Dendritic cell treated with granulocyte-macrophage colony-stimulating factor and Interleukin-4, amounts not matched to agents 40 ng/mL and 50 ng/mL, for 4 days (primary cell): ENCODE measurements at regions of chr2 and their contacts with region 1.

Region 1: DNA sequence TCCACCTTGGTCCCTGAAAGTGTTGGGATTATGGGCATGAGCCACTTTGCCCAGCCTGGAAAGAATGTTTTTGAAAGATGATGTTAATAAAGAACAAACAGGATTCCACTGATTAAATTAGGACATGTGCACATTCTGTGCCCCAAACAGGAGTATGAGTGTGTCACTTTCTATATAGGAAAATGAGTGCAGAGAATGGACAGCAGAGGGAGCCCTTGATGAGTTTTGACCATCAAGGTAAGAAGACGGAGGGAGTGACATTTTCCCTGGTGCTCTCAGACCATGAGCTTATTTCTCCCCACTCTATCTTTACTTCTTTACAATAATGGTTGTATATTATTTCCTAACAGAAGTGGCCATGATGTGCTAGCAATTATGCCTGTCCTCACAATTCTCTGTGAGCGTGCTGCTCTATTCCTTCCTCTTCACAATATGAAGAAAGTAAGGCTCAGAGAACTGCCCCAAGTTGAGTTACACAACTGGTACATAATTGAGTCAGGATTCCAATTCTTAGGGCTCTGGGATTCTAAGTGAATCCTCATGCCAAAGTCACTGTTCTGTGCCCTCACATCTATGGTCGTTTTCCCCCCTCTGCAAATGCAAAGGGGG is 20.6 kb downstream of the RPL37A start:
- H3K4me3 Mint-ChIP-seq: no peak overlapping the region
- H3K27ac Mint-ChIP-seq: no peak overlapping the region
- H3K4me1 Mint-ChIP-seq: no peaks in the 10 kb centered on the region
- H3K27me3 Mint-ChIP-seq: peaks cover 1% of the 10 kb centered on the region

Region 2: DNA sequence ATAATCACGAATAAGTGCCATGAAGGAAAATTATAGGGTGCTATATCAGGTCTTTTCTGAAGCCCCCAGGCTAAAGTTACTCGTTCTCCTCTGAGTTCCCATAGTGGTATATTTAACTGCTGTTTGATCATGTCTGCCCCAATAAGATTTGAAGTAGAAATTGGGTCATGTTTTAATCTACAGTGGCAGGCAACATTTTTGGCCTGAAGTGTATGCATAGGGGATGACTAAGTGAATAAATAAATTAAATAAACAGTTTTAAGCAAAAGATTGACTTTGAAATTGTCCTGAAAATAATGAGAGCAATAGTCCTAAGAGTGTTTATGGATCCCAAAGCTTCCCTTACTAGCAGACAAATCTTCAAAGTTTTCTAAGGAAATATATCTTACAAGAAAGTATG is 982.6 kb after region 1 on chr2:
- intact Hi-C with region 1: loop called (anchors 10 kb)
- H3K4me3 Mint-ChIP-seq: no peak overlapping the region
- H3K27ac Mint-ChIP-seq: no peak overlapping the region
- H3K4me1 Mint-ChIP-seq: peaks cover 5% of the 10 kb centered on the region
- H3K27me3 Mint-ChIP-seq: peaks cover 31% of the 10 kb centered on the region